Dorsolateral prefrontal cortex (tissue), 120 donors: ENCODE measurements at regions of chr11 and their contacts with region 1.

Region 1: GRCh38 chr11:121249039-121249663 is 43.4 kb upstream of the SC5D start:
- DNase-seq: no peak
- H3K4me3 ChIP-seq: peak overlapping the region in 9 of 59 donors; percentile 3 to 41 (median 20)
- H3K27ac ChIP-seq: peak overlapping the region in 1 of 59 donors; percentile 14
- H3K27me3 ChIP-seq: no peaks in the 10 kb centered on the region
- CTCF ChIP-seq: peak; percentile 66 to 96 (median 82)

Region 2: GRCh38 chr11:121236115-121237001 is 12.8 kb before region 1 on chr11:
- intact Hi-C with region 1: no loop called
- DNase-seq: no peak
- H3K4me3 ChIP-seq: no peak overlapping the region
- H3K27ac ChIP-seq: no peak overlapping the region
- H3K27me3 ChIP-seq: peaks cover 0 to 21% (median 0%) of the 10 kb centered on the region in 45 donors
- CTCF ChIP-seq: no peak

Region 3: DNA sequence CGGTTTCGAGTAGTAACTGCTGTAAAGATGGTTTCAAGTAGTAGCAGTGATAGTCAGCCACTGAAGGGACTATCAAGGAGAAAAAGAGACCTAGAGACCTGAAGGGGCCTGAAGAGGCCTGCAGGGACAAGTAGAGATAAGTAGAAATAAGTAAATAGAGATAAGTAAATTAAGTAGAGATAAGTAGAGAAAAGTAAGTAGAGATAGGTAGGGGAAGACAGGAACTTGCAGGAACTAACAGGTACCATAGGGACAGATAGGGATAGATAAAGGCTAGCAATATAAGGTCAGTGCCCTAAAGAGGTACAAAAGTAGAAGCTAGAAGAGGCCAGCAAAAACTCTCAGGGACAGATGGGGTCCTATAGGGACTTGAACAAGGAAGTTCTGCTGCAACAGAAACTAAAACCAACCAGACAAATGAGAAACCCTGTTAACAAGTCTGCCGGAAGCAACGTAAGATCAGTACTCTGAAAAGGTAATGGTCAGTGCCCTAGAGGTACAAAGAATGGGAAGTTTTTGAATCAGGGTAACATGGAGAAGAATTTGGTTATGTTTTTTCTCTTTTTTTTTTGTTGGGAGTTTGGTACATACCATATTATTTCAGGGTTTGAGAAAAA is 33.8 kb after region 1 on chr11:
- intact Hi-C with region 1: no loop called
- DNase-seq: no peak
- H3K4me3 ChIP-seq: no peak overlapping the region
- H3K27ac ChIP-seq: no peak overlapping the region
- H3K27me3 ChIP-seq: peaks cover 0 to 2% (median 0%) of the 10 kb centered on the region in 45 donors
- CTCF ChIP-seq: no peak

Region 4: DNA sequence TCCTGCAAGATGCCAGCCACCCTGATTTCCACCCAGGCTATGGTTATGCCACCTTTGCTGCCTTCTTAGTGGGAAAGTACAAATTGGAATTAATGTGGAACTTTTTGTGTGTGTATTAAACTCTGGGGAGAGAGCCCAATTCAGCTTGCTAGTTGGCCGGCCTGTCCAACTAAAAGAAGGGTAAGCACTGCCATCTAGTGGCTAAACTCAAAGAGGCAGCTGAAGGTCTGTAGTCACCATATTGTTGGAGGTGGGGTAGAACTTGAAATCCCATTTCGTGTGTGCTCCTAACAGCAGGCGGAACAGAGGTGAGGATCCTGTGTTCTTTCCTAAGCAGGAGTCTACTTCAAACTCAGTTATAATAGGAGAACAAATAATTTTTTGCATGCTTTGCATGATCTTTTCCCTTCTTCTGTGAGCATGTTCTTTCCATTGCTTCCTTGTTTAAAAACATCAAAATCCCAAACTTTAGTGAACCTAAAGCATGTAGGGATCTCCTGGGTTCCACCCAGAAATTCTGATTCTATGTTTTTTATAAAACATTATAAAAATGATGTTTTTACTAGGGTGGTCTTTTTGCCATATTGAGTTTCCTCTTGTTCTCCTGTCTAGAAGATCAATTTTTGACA is 342.4 kb after region 1 on chr11:
- intact Hi-C with region 1: loop called (anchors 5 kb)
- DNase-seq: peak in 6 of 10 donors; percentile 59 to 81 (median 68)
- H3K4me3 ChIP-seq: no peak overlapping the region
- H3K27ac ChIP-seq: peak overlapping the region in 52 of 59 donors; percentile 1 to 84 (median 62)
- H3K27me3 ChIP-seq: no peaks in the 10 kb centered on the region
- CTCF ChIP-seq: peak; percentile 81 to 96 (median 93)